GM13976 (cell line): ENCODE measurements at regions of chr7 and their contacts with region 1.

Region 1: DNA sequence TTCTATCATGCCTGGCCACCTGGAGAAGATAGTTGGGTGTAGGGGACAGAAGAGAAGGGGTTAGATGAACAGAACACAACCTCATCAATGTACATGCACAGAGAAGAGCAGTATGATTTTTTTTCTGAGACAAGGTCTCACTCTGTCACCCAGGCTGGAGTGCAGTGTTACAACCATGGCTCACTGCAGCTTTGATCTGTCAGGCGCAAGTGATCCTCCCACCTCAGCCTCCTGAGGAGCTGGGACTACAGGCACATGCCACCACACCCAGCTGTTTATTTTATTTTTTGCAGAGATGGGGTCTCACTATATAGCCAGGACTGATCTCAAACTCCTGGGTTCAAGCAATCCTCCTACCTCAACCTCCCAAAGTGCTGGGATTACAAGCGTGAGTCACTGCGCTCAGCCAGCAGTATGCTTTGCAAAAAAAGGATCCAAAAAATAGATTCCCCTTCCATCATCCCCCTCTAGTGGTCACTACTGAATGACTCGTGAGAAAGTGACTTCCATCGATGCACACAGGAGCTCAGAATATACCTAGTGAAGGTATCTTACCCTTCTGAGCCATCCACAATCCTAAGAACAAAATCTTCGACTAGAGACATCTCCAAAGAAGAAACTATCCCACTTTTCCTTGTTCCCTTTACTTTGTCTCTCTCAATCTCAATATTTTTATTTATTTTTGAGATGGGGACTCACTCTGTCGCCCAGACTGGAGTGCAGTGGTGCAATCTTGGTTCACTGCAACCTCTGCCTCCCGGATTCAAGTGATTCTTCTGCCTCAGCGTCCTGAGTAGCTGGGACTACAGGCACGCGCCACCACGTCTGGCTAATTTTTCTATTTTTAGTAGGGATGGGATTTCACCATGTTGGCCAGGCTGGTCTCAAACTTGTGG is 21.0 kb downstream of the ZCWPW1 start:
- DNase-seq: peak; percentile 72
- CTCF ChIP-seq: peak; percentile 64

Region 2: GRCh38 chr7:100132697-100133151 is 274.8 kb before region 1 on chr7:
- in situ Hi-C with region 1: loop called (anchors 10 kb)
- DNase-seq: peak; percentile 83
- CTCF ChIP-seq: peak; percentile 84